PC-9 (cell line): ENCODE measurements at regions of chr14 and their contacts with region 1.

Region 1: DNA sequence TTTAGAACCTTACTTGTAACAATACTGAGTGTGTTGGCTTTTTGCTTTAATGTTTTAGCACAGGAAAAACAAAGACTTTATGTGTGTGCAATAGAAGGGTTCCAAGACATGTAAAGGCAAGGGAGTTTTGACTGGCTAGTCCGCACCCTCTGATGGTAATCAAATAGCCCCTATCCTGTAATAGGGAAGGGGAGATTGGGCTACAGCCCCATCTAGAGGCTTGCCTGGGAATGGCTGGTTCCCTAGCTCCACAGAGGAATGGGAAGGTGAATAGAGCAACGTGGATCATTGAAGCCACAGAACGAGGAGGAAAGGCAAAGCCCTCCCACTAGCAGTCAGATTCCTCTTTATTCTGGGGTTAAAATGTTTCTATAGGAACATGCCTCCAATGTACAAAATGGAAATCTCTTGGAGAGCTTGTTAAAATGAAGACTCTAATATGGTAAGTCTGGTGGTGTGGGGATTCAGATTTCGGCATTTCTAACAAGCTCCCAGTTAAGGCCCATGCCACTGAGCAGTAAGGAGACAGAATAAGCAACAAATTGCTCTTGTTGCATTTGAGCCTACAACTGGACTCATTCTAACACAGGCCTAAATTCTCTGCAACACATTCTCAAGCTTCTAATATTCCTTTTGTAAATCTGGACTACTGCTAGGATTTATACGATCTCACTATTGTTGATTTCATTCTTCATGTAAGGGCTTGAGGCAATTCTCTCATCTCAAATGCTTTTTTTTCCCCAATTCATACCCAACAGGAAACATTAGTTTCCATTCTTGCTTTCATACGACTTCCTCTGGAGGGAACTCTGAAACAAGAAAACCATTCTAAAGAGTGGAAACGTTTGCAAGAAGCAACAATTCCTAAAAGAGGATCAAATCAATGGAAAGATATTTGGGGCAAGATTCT is 57.1 kb downstream of the NIN start:
- DNase-seq: peak in 1 of 2 experiments; percentile 53
- H3K4me3 ChIP-seq: no peak overlapping the region
- H3K27ac ChIP-seq: no peak overlapping the region
- H3K4me1 ChIP-seq: peaks cover 23% of the 10 kb centered on the region
- H3K27me3 ChIP-seq: no peaks in the 10 kb centered on the region
- CTCF ChIP-seq: peak; percentile 80

Region 2: DNA sequence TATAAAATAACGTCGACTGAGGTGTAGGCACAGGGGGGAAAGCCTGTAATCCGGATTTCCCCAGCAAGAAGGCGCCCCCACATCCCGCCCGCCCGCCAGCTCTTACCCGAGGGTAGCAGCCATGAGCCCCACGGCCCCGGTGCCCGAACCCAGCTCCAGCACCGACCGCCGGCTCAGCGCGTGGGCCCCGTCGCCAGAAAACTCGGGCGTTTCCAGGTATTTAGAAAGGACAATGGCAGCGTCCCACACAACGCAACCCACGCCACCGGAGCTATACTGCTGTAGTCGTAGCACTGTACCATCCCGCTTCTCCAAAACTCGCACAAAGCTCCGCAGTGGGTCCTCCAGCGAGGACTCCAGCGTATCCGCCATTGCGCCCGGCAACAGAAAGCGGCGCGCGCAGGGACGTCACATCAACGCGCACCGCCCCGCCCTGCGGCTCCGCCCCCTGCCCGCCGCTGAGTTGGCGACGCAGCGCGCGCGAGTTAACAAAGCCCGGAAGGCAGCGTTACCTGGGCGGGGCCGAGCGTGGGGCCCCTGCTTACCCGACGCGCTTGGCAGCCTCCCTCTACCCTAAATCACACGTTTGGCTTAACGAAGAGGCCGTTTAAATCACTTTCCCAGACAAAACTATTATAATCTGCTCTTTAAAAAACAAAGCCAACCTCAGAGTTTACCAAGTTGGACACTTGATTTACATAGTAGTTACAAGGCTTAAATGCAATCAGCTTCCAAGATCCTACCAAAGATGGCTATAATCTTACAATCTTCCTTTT is 657.5 kb before region 1 on chr14 and contains the start of gene VCPKMT:
- CTCF ChIA-PET with region 1: no interaction called
- POLR2A ChIA-PET with region 1: no interaction called
- intact Hi-C with region 1: loop called (anchors 10 kb)
- DNase-seq: peak; percentile 79 to 93
- H3K4me3 ChIP-seq: peak within 1 kb of the TSS; percentile 84
- H3K27ac ChIP-seq: peak within 1 kb of the TSS; percentile 66
- H3K4me1 ChIP-seq: peaks cover 22% of the 10 kb centered on the region
- H3K27me3 ChIP-seq: no peaks in the 10 kb centered on the region
- CTCF ChIP-seq: no peak
- total RNA-seq, gene VCPKMT: 6.5 and 9.4 TPM in 2 replicates

Region 3: DNA sequence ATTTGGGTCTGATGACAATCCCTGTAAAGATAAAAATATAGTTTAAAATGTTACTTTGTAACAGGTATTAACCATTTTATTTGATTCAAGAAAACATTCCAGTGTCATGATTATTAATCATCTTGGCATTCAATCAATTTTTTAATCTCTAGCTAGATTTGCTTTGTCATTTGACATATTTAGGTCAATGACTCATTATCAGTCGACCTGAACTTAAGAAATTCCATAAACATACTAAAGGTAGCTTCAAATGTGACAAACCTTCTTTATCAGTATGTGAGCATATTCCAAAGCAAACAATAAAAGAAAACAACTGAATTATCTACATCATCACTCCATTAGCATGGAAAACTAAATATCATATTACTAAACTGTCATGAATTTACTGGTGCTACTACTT is 326.4 kb before region 1 on chr14:
- CTCF ChIA-PET with region 1: no interaction called
- POLR2A ChIA-PET with region 1: no interaction called
- intact Hi-C with region 1: loop called (anchors 10 kb)
- DNase-seq: peak in 1 of 2 experiments; percentile 92
- H3K4me3 ChIP-seq: no peak overlapping the region
- H3K27ac ChIP-seq: peak overlapping the region; percentile 66
- H3K4me1 ChIP-seq: peaks cover 29% of the 10 kb centered on the region
- H3K27me3 ChIP-seq: no peaks in the 10 kb centered on the region
- CTCF ChIP-seq: no peak

Region 4: DNA sequence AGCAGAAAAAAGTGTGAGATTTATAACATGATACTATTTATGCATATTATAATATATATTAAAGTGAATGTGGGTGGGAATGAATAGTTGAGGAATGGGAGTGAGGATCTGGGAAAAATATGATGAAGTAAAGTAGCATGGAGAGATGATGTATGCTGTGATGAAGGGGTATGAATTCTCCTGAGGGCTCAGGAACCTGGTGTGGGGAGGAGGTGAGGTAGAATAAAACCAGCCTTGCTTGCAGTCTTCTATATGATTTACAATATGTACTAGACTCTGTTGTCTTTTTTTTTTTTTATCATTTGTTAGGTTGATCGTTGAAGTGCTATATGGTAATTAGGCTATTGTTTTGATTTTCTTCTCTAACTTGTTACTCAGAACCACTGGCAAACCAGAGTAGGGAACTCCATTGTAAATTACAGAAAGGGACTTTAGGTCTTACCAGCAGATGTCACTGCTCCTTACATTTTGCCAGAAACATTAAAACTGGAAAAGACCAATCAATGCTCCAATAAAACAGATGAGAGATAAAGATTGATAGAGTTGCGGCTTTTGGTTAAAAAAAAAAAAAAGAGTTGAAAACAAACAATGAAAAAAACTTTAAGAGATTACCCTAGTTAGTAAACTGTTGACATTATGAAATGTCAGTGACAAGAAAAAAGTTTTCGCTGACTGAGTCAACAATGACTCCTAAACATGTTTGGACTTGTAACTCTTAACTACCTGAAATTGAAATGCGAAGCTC is 174.0 kb before region 1 on chr14:
- CTCF ChIA-PET with region 1: interaction called, 8 read pairs
- POLR2A ChIA-PET with region 1: no interaction called
- intact Hi-C with region 1: loop called (anchors 1 kb)
- DNase-seq: peak in 1 of 2 experiments; percentile 63
- H3K4me3 ChIP-seq: no peak overlapping the region; the same call in 1 of the 2 replicates
- H3K27ac ChIP-seq: no peak overlapping the region
- H3K4me1 ChIP-seq: peaks cover 20% of the 10 kb centered on the region
- H3K27me3 ChIP-seq: no peaks in the 10 kb centered on the region
- CTCF ChIP-seq: peak; percentile 70

Region 5: GRCh38 chr14:50667996-50668825 is 105.7 kb before region 1 on chr14 and contains the start of gene SAV1:
- CTCF ChIA-PET with region 1: no interaction called
- POLR2A ChIA-PET with region 1: interaction called, 20 read pairs
- intact Hi-C with region 1: loop called (anchors 2 kb)
- DNase-seq: peak; percentile 70 to 76
- H3K4me3 ChIP-seq: peak within 1 kb of the TSS; percentile 99
- H3K27ac ChIP-seq: peak within 1 kb of the TSS; percentile 80
- H3K4me1 ChIP-seq: peaks cover 23% of the 10 kb centered on the region
- H3K27me3 ChIP-seq: no peaks in the 10 kb centered on the region
- CTCF ChIP-seq: no peak
- total RNA-seq, gene SAV1: 37.1 and 40.7 TPM in 2 replicates

Region 6: GRCh38 chr14:50860478-50861086 is 86.7 kb after region 1 on chr14:
- CTCF ChIA-PET with region 1: interaction called, 10 read pairs
- POLR2A ChIA-PET with region 1: no interaction called
- intact Hi-C with region 1: loop called (anchors 5 kb)
- DNase-seq: peak; percentile 64 to 80
- H3K4me3 ChIP-seq: peak overlapping the region; percentile 56; the same call in 1 of the 2 replicates
- H3K27ac ChIP-seq: no peak overlapping the region
- H3K4me1 ChIP-seq: no peaks in the 10 kb centered on the region
- H3K27me3 ChIP-seq: no peaks in the 10 kb centered on the region
- CTCF ChIP-seq: peak; percentile 78

Region 7: GRCh38 chr14:50927987-50928635 is 154.2 kb after region 1 on chr14:
- CTCF ChIA-PET with region 1: no interaction called
- POLR2A ChIA-PET with region 1: no interaction called
- intact Hi-C with region 1: no loop called
- DNase-seq: no peak
- H3K4me3 ChIP-seq: no peak overlapping the region
- H3K27ac ChIP-seq: no peak overlapping the region
- H3K4me1 ChIP-seq: no peaks in the 10 kb centered on the region
- H3K27me3 ChIP-seq: no peaks in the 10 kb centered on the region
- CTCF ChIP-seq: no peak